Posterior cingulate gyrus (tissue), 11 donors: ENCODE measurements at regions of chr4 and their contacts with region 1.

Region 1: DNA sequence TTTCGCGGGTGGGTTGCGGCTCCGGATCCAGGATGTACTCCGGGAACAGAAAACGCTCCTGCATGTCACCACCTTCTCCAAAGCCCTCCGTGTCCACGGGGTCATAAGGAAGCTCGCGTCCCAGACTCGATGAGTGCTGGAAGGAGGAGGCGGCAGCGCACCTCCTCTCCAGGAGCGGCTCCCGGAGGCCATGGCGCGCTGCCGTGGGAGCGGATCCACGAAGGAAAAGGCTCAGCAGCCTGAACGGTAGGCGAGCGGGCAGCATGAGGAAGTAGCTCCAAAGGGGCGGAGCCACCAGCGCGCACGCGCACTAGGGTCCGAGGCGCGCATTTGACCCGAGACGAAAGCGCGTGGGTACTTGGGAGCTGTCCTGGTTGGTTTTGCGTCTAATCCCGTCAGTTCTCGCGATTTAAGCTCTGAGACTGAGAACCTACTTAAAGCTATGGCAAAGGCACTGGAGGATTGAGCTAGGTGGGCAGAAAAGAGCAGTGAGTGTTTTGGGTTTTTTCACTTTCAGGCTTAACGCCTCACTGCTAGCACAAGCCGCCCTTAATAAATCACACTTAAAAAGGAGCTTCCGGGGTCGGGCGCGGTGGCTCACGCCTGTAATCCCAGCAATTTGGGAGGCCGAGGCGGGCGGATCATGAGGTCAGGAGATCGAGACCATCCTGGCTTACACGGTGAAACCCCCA is at the start of gene NOA1:
- DNase-seq: peak; percentile 93 to 100 (median 96)

Region 2: GRCh38 chr4:56907489-56908205 is 69.8 kb before region 1 on chr4 and contains the start of gene REST:
- intact Hi-C with region 1: loop called (anchors 1 kb)
- DNase-seq: peak in 9 of 10 donors; percentile 22 to 93 (median 48)

Region 3: GRCh38 chr4:56958111-56958517 is 19.4 kb before region 1 on chr4:
- intact Hi-C with region 1: loop called (anchors 2 kb)
- DNase-seq: peak in 8 of 10 donors; percentile 35 to 94 (median 58)

Region 4: DNA sequence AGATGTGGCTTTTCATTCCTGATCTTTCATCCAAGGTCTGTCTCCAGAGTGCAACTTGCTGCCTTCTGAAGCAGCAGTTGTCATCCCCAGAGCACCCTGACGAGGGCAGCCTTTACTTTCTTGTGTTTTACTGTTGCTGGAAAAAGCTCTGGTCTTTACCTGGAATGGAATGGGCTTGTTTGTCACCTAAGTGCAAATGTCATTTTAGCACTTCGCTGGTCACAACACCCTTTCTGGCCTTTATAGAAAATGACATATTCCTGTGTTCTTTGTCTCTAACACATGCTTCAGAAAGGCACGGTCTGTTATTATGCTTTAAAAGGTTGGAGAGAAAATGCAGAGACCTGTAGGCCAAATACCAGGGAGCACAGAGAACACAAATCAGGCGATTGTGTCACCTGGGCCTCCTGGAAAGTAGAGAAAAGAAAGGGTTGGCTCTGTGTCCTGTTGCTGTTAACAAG is 465.4 kb after region 1 on chr4:
- intact Hi-C with region 1: no loop called
- DNase-seq: peak; percentile 25 to 90 (median 52)